ENCODE measurements at regions of chr12 and their contacts with region 1.

Region 1: GRCh38 chr12:29380536-29381523 is at the start of gene ERGIC2:
- DNase-seq: peak; percentile 90
- H3K4me3 Mint-ChIP-seq: peak within 1 kb of the TSS; percentile 97
- H3K27ac Mint-ChIP-seq: peak within 1 kb of the TSS; percentile 94
- H3K4me1 Mint-ChIP-seq: peaks cover 31% of the 10 kb centered on the region
- H3K27me3 Mint-ChIP-seq: peaks cover 4% of the 10 kb centered on the region
- total RNA-seq, gene ERGIC2: 94.9 and 105 TPM in 2 replicates

Region 2: GRCh38 chr12:29103539-29103974 is 277.3 kb before region 1 on chr12:
- intact Hi-C with region 1: loop called (anchors 1 kb)
- DNase-seq: peak; percentile 58
- H3K4me3 Mint-ChIP-seq: peak overlapping the region; percentile 34
- H3K27ac Mint-ChIP-seq: peak overlapping the region; percentile 75
- H3K4me1 Mint-ChIP-seq: peaks cover 31% of the 10 kb centered on the region
- H3K27me3 Mint-ChIP-seq: peaks cover 10% of the 10 kb centered on the region

Region 3: DNA sequence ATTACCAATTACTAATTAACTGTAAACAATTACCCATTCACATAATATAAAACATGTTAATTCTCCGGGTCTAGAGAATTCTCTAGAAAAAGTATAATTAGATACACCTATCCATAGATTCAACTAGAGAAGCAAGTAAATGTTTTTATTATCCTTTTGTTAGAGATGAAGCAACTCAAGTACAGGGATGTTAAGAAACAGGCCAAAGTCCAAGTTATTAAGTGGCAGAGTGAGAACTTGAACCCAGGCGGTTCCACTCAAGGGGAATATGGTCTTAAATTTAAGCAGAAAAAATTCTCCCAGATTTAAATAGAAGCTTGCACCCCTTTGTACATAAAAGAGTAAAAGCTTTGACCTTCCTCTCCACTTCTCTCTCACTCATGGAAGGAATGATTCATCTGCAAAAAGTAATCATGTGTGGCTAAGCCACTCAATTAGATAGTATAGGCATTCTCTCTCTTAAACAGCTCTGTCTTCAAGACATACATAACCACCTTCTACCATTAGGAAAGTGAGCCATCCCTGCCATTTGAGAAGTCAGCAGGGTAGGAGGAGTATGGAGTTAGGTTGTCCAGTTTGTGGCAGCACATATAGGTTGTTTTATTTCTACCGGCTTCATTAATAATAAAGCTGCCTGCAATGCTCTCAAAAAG is 33.9 kb before region 1 on chr12:
- intact Hi-C with region 1: loop called (anchors 2 kb)
- DNase-seq: no peak
- H3K4me3 Mint-ChIP-seq: no peak overlapping the region
- H3K27ac Mint-ChIP-seq: no peak overlapping the region
- H3K4me1 Mint-ChIP-seq: peaks cover 14% of the 10 kb centered on the region
- H3K27me3 Mint-ChIP-seq: no peaks in the 10 kb centered on the region

Region 4: DNA sequence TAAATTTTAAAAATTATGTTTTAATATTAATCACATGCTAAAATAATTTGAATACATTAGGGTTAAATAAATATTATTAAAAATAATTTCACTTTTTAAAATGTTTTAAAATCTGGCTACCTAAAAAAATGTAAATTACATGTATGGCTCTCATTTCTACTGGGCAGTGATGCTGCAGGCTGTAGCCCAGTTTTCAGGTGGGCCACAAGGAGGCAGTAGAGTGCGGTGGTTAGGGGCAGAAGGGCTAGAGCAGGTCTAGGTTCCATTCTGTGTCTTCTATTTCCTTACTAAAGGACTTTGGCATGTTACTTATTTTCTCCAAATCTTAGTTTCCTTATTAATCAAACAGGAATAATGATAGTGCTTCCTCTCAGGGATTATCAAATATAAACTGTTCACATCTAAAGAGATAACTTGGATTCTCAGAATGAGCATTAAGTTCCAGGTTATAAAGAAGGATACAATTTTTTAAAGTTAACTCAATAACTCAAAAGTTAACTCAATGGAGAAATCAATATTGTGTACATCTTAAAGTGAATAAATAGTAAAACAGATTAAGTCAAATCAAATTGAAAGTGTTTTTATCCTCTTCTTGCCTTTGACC is 171.6 kb after region 1 on chr12:
- intact Hi-C with region 1: no loop called
- DNase-seq: peak; percentile 41
- H3K4me3 Mint-ChIP-seq: no peak overlapping the region
- H3K27ac Mint-ChIP-seq: no peak overlapping the region
- H3K4me1 Mint-ChIP-seq: no peaks in the 10 kb centered on the region
- H3K27me3 Mint-ChIP-seq: no peaks in the 10 kb centered on the region

Region 5: DNA sequence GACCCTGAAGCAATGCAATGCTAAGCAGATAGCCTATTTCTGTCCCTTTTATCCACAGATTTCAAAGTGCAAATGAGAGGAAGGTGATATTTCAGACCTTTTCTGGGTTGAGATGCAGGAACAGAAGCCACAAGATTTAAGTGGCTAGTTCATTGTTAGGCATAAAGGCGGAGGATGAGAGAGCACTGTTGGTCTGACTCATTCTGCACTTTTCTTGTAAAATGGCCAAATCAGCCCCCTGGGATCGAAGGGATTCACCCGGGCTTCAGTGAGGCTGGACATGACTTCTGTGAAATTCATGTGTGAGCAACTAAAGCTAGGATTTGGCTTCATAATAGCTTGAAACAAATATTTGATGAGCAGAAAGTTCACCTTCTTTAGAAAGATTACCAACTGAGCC is 218.6 kb after region 1 on chr12:
- intact Hi-C with region 1: no loop called
- DNase-seq: no peak
- H3K4me3 Mint-ChIP-seq: no peak overlapping the region
- H3K27ac Mint-ChIP-seq: no peak overlapping the region
- H3K4me1 Mint-ChIP-seq: no peaks in the 10 kb centered on the region
- H3K27me3 Mint-ChIP-seq: peaks cover under 1% of the 10 kb centered on the region

Region 6: GRCh38 chr12:30754709-30755394 is 1374.0 kb after region 1 on chr12 and contains the start of gene CAPRIN2:
- intact Hi-C with region 1: loop called (anchors 1 kb)
- DNase-seq: peak; percentile 94
- H3K4me3 Mint-ChIP-seq: peak within 1 kb of the TSS; percentile 94
- H3K27ac Mint-ChIP-seq: peak within 1 kb of the TSS; percentile 82
- H3K4me1 Mint-ChIP-seq: peaks cover 24% of the 10 kb centered on the region
- H3K27me3 Mint-ChIP-seq: peaks cover 6% of the 10 kb centered on the region
- total RNA-seq, gene CAPRIN2: 9.1 and 9.4 TPM in 2 replicates

Measured in activated T-helper 1 cell treated with anti-CD3 and anti-CD28 coated beads, Interleukin-12 subunit alpha, Interleukin-12 subunit beta, Interleukin-2, Interleukin-4 antibody, amounts not matched to agents 30 ng/mL and 10 ng/mL and 1 ng/mL, durations not matched to agents 14 hours and 24 hours and 36 hours (primary cell).